Natural killer cell (primary cell): ENCODE measurements at regions of chr11 and their contacts with region 1.

Region 1: GRCh38 chr11:65454696-65455456 is 32.3 kb downstream of the NEAT1 start:
- DNase-seq: peak; percentile 72 to 87
- ATAC-seq: peak; percentile 90 to 94 (median 92)
- H3K4me3 ChIP-seq: peak overlapping the region; percentile 47
- H3K4me3 Mint-ChIP-seq: peak overlapping the region; percentile 90
- H3K27ac ChIP-seq: peak overlapping the region; percentile 35
- H3K27ac Mint-ChIP-seq: peak overlapping the region; percentile 77 to 93
- H3K4me1 ChIP-seq: peaks cover 18% of the 10 kb centered on the region
- H3K4me1 Mint-ChIP-seq: peaks cover 11 to 16% of the 10 kb centered on the region in 2 donors
- H3K27me3 ChIP-seq: no peaks in the 10 kb centered on the region
- H3K27me3 Mint-ChIP-seq: no peaks in the 10 kb centered on the region
- CTCF ChIP-seq: no peak

Region 2: GRCh38 chr11:65439331-65440181 is 15.3 kb before region 1 on chr11:
- intact Hi-C with region 1: loop called (anchors 2 kb)
- DNase-seq: no peak
- ATAC-seq: no peak
- H3K4me3 ChIP-seq: no peak overlapping the region
- H3K4me3 Mint-ChIP-seq: peak overlapping the region; percentile 17
- H3K27ac ChIP-seq: no peak overlapping the region
- H3K27ac Mint-ChIP-seq: peak overlapping the region; percentile 78 to 92
- H3K4me1 ChIP-seq: peaks cover 61% of the 10 kb centered on the region
- H3K4me1 Mint-ChIP-seq: peaks cover 77 to 92% of the 10 kb centered on the region in 2 donors
- H3K27me3 ChIP-seq: no peaks in the 10 kb centered on the region
- H3K27me3 Mint-ChIP-seq: no peaks in the 10 kb centered on the region
- CTCF ChIP-seq: no peak